ENCODE measurements at regions of chr10 and their contacts with region 1.

Region 1: DNA sequence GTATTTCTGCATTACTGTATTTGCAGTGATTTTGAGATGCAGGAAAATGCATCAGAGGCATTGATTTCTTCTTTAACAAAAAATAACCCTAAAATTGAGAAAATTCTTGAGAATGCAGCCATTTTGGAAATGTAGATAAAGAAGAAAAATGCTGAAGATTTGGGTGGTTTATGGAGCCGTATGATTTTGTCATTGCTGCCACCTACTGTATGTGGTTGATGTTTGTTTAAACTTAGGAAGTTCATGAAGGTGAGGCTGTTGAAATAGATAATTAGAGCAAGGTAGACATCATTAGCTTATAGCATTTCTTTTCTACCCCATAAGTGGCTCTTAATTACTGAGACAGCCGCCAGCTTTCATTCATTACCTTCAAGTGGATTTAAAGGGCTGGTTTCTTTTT is 92.1 kb upstream of the SAMD8 start:
- DNase-seq: no peak
- ATAC-seq: no peak
- H3K4me3 Mint-ChIP-seq: no peak overlapping the region
- H3K27ac Mint-ChIP-seq: peak overlapping the region; percentile 12
- H3K4me1 Mint-ChIP-seq: peaks cover 30% of the 10 kb centered on the region
- H3K27me3 Mint-ChIP-seq: no peaks in the 10 kb centered on the region
- CTCF ChIP-seq: peak; percentile 52

Region 2: DNA sequence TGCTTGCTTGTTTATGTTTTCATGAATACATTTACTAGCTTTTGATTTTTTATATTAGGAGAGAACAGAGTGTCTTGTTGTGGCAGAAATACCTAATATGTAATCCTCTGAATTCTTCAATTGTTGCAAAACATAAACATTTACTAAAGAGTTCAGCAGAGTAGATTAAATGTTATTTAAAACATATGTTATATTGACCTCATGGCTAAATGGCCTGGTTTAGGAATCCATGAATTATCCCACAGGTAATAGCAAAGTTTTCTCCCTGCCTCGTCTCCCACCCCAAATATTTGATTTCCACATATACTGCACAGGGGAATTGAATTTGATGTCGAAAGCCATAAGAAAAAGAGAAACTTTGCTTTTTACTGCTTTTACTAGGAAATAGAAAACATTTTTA is 756.5 kb before region 1 on chr10:
- CTCF ChIA-PET with region 1: interaction called, 6 read pairs
- POLR2A ChIA-PET with region 1: no interaction called
- intact Hi-C with region 1: loop called (anchors 10 kb)
- DNase-seq: no peak
- ATAC-seq: no peak
- H3K4me3 Mint-ChIP-seq: no peak overlapping the region
- H3K27ac Mint-ChIP-seq: no peak overlapping the region
- H3K4me1 Mint-ChIP-seq: peaks cover 22% of the 10 kb centered on the region
- H3K27me3 Mint-ChIP-seq: no peaks in the 10 kb centered on the region
- CTCF ChIP-seq: no peak

Region 3: GRCh38 chr10:74750848-74751274 is 268.5 kb before region 1 on chr10:
- CTCF ChIA-PET with region 1: interaction called, 15 read pairs
- POLR2A ChIA-PET with region 1: no interaction called
- intact Hi-C with region 1: no loop called
- DNase-seq: peak; percentile 69
- ATAC-seq: peak; percentile 90
- H3K4me3 Mint-ChIP-seq: no peak overlapping the region
- H3K27ac Mint-ChIP-seq: no peak overlapping the region
- H3K4me1 Mint-ChIP-seq: peaks cover 19% of the 10 kb centered on the region
- H3K27me3 Mint-ChIP-seq: no peaks in the 10 kb centered on the region
- CTCF ChIP-seq: no peak

Region 4: DNA sequence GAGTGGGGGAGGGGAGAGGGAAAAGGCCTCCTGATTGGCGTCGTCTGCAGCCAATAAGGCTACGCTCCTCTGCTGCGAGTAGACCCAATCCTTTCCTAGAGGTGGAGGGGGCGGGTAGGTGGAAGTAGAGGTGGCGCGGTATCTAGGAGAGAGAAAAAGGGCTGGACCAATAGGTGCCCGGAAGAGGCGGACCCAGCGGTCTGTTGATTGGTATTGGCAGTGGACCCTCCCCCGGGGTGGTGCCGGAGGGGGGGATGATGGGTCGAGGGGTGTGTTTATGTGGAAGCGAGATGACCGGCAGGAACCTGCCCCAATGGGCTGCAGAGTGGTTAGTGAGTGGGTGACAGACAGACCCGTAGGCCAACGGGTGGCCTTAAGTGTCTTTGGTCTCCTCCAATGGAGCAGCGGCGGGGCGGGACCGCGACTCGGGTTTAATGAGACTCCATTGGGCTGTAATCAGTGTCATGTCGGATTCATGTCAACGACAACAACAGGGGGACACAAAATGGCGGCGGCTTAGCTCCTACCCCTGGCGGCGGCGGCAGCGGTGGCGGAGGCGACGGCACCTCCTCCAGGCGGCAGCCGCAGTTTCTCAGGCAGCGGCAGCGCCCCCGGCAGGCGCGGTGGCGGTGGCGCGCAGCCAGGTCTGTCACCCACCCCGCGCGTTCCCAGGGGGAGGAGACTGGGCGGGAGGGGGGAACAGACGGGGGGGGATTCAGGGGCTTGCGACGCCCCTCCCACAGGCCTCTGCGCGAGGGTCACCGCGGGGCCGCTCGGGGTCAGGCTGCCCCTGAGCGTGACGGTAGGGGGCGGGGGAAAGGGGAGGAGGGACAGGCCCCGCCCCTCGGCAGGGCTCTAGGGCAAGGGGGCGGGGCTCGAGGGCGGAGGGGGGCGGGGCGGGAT is 193.0 kb before region 1 on chr10 and contains the start of gene KAT6B:
- CTCF ChIA-PET with region 1: interaction called, 3 read pairs
- POLR2A ChIA-PET with region 1: no interaction called
- intact Hi-C with region 1: loop called (anchors 10 kb)
- DNase-seq: peak; percentile 100
- ATAC-seq: peak; percentile 85
- H3K4me3 Mint-ChIP-seq: peak within 1 kb of the TSS; percentile 89
- H3K27ac Mint-ChIP-seq: peak within 1 kb of the TSS; percentile 92
- H3K4me1 Mint-ChIP-seq: peaks cover 58% of the 10 kb centered on the region
- H3K27me3 Mint-ChIP-seq: no peaks in the 10 kb centered on the region
- CTCF ChIP-seq: no peak
- total RNA-seq, gene KAT6B: 22.8 to 24.8 TPM

Region 5: GRCh38 chr10:75001715-75002350 is 17.5 kb before region 1 on chr10:
- CTCF ChIA-PET with region 1: interaction called, 14 read pairs
- POLR2A ChIA-PET with region 1: no interaction called
- intact Hi-C with region 1: no loop called
- DNase-seq: no peak
- ATAC-seq: no peak
- H3K4me3 Mint-ChIP-seq: no peak overlapping the region
- H3K27ac Mint-ChIP-seq: no peak overlapping the region
- H3K4me1 Mint-ChIP-seq: peaks cover 14% of the 10 kb centered on the region
- H3K27me3 Mint-ChIP-seq: no peaks in the 10 kb centered on the region
- CTCF ChIP-seq: no peak

Region 6: GRCh38 chr10:75035975-75036708 is 16.8 kb after region 1 on chr10:
- CTCF ChIA-PET with region 1: interaction called, 16 read pairs
- POLR2A ChIA-PET with region 1: no interaction called
- intact Hi-C with region 1: no loop called
- DNase-seq: peak; percentile 85
- ATAC-seq: peak; percentile 82
- H3K4me3 Mint-ChIP-seq: no peak overlapping the region
- H3K27ac Mint-ChIP-seq: peak overlapping the region; percentile 89
- H3K4me1 Mint-ChIP-seq: peaks cover 66% of the 10 kb centered on the region
- H3K27me3 Mint-ChIP-seq: no peaks in the 10 kb centered on the region
- CTCF ChIP-seq: no peak

Region 7: GRCh38 chr10:75099952-75100763 is 80.8 kb after region 1 on chr10:
- CTCF ChIA-PET with region 1: interaction called, 14 read pairs
- POLR2A ChIA-PET with region 1: no interaction called
- intact Hi-C with region 1: loop called (anchors 5 kb)
- DNase-seq: peak; percentile 85
- ATAC-seq: peak; percentile 99
- H3K4me3 Mint-ChIP-seq: no peak overlapping the region
- H3K27ac Mint-ChIP-seq: peak overlapping the region; percentile 30
- H3K4me1 Mint-ChIP-seq: peaks cover 7% of the 10 kb centered on the region
- H3K27me3 Mint-ChIP-seq: no peaks in the 10 kb centered on the region
- CTCF ChIP-seq: peak; percentile 99

Region 8: GRCh38 chr10:75449382-75450070 is 430.2 kb after region 1 on chr10:
- CTCF ChIA-PET with region 1: no interaction called
- POLR2A ChIA-PET with region 1: no interaction called
- intact Hi-C with region 1: no loop called
- DNase-seq: no peak
- ATAC-seq: no peak
- H3K4me3 Mint-ChIP-seq: no peak overlapping the region
- H3K27ac Mint-ChIP-seq: no peak overlapping the region
- H3K4me1 Mint-ChIP-seq: no peaks in the 10 kb centered on the region
- H3K27me3 Mint-ChIP-seq: peaks cover 3% of the 10 kb centered on the region
- CTCF ChIP-seq: no peak